Pancreas (tissue), 10 donors: ENCODE measurements at regions of chr7 and their contacts with region 1.

Region 1: DNA sequence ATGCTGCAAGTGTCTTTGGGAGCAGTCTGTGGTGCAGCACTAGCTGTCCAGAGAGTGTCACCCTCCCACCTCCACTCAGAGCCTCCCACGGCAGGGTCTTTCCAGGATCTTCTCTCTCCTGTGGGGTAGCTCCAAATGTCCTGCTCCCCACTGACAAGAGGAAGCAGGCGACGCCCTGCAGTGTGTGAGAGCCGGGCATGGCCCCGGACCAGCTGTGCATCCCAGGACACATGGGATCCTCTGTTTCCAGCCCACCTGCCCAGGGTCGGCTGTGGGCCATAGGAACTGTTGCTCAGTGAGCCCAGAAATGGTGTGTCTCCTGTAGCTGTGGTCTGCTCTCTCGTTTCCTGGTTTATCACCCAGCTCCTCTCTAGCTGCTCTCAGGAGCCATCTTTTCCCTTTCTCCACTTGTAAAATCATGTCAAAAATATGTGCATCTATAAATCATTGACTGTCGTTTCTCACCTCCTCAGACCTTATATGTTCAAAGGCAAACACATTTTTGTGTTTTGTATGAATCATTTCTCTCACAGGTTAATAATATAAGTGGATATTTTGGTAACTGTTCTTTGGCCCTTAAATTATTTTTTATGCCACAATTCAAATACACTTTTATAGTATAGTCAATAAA is 74.9 kb downstream of the VWC2 start:
- DNase-seq: no peak
- ATAC-seq: no peak
- H3K4me3 ChIP-seq: no peak overlapping the region
- H3K27ac ChIP-seq: no peak overlapping the region
- H3K4me1 ChIP-seq: no peaks in the 10 kb centered on the region
- H3K27me3 ChIP-seq: no peaks in the 10 kb centered on the region
- CTCF ChIP-seq: no peak

Region 2: GRCh38 chr7:48280100-48280499 is 1568.2 kb before region 1 on chr7:
- intact Hi-C with region 1: loop called in 1 of 3 experiments (anchors 10 kb)
- DNase-seq: no peak
- ATAC-seq: peak in 2 of 4 donors; percentile 23 to 25
- H3K4me3 ChIP-seq: no peak overlapping the region
- H3K27ac ChIP-seq: no peak overlapping the region
- H3K4me1 ChIP-seq: no peaks in the 10 kb centered on the region
- H3K27me3 ChIP-seq: no peaks in the 10 kb centered on the region
- CTCF ChIP-seq: no peak